ENCODE measurements at regions of chr16 and their contacts with region 1.

Region 1: DNA sequence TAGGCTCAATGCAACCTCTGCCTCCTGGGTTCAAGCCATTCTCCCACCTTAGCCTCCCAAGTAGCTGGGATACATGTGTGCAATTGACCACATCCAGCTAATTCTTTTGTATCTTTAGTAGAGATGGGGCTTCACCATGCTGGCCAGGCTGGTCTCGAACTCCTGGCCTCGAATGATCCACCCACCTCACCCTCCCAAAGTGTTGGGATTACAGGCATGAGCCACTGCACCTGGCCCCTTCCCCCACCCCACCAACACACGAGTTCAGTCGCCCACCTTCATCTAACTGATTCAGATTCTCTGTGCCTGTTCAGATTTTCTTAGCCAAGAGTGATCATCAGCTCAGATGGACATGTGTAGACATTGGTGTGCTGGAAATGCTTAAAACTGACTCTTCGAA is 25.0 kb upstream of the METTL9 start:
- DNase-seq: peak in 1 of 4 donors; percentile 45
- ATAC-seq: no peak
- H3K4me3 ChIP-seq: no peak overlapping the region
- H3K27ac ChIP-seq: no peak overlapping the region
- H3K4me1 ChIP-seq: no peaks in the 10 kb centered on the region
- H3K27me3 ChIP-seq: peaks cover 0 to 7% of the 10 kb centered on the region in 2 donors
- CTCF ChIP-seq: no peak

Region 2: GRCh38 chr16:22670551-22671041 is 1096.2 kb after region 1 on chr16:
- intact Hi-C with region 1: loop called in 1 of 2 experiments (anchors 10 kb)
- DNase-seq: no peak
- ATAC-seq: no peak
- H3K4me3 ChIP-seq: no peak overlapping the region
- H3K27ac ChIP-seq: no peak overlapping the region
- H3K4me1 ChIP-seq: no peaks in the 10 kb centered on the region
- H3K27me3 ChIP-seq: peaks cover 0 to 53% of the 10 kb centered on the region in 2 donors
- CTCF ChIP-seq: no peak